ENCODE measurements at regions of chr4 and their contacts with region 1.

Region 1: GRCh38 chr4:168514249-168514852 is 17.5 kb downstream of the PALLD start:
- DNase-seq: no peak
- H3K4me3 Mint-ChIP-seq: no peak overlapping the region
- H3K27ac Mint-ChIP-seq: no peak overlapping the region
- H3K4me1 Mint-ChIP-seq: peaks cover 30% of the 10 kb centered on the region
- H3K27me3 Mint-ChIP-seq: no peaks in the 10 kb centered on the region

Region 2: DNA sequence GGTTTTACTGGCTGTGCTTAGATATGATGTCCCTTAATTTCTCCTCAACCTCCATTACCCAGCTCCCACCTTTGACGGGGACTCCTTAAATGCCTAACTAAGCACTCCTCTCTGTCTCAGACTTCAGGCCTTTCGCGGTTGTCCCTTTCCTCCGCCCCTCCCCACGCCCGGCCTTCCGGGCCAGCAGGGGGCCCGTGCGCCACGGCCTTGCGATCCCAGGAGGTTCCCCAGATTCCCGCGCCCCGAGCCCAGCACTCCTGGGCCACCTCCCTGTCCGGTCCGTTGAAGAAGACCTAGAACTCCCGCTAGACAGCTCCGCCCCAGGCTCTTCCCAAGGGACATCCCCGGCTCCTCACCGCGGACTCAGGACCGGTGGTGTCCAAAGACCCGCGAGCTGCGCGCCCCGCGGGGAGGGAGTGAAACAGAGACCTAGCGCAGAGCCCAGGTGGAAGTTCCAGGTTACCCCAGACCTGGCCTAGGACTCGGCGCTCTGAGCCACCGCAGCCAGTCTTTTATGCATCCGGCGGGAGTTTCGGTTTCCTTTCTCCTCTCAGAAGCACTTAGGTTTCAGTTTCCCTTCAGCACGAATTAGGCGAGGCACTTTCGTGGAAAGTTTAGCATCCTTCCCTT is 196.0 kb before region 1 on chr4 and contains the start of gene DDX60:
- CTCF ChIA-PET with region 1: interaction called, 3 read pairs
- POLR2A ChIA-PET with region 1: no interaction called
- intact Hi-C with region 1: loop called (anchors 1 kb)
- DNase-seq: peak; percentile 89
- H3K4me3 Mint-ChIP-seq: peak within 1 kb of the TSS; percentile 84
- H3K27ac Mint-ChIP-seq: peak within 1 kb of the TSS; percentile 88
- H3K4me1 Mint-ChIP-seq: peaks cover 32% of the 10 kb centered on the region
- H3K27me3 Mint-ChIP-seq: no peaks in the 10 kb centered on the region
- total RNA-seq, gene DDX60: 24.1 to 28.9 TPM

Region 3: DNA sequence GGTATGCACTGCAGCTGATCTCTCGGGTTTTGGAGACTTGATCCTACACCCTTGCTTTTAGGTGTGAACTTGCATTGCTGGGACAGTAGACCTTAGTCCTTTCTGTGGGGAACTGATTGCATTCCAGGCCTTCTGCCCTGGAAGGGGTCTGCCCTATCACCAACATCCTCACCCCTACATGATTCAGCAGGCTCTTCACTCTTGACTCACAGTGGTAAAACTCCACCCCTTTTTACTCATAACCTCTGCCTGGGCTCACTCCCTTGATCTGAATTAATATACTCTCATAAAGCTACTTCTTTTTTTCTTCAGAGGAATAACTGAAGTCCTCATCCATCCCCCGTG is 27.4 kb before region 1 on chr4:
- CTCF ChIA-PET with region 1: interaction called, 3 read pairs
- POLR2A ChIA-PET with region 1: interaction called, 3 read pairs
- intact Hi-C with region 1: loop called (anchors 1 kb)
- DNase-seq: peak; percentile 23
- H3K4me3 Mint-ChIP-seq: no peak overlapping the region
- H3K27ac Mint-ChIP-seq: peak overlapping the region; percentile 25
- H3K4me1 Mint-ChIP-seq: peaks cover 25% of the 10 kb centered on the region
- H3K27me3 Mint-ChIP-seq: peaks cover 2% of the 10 kb centered on the region

Region 4: DNA sequence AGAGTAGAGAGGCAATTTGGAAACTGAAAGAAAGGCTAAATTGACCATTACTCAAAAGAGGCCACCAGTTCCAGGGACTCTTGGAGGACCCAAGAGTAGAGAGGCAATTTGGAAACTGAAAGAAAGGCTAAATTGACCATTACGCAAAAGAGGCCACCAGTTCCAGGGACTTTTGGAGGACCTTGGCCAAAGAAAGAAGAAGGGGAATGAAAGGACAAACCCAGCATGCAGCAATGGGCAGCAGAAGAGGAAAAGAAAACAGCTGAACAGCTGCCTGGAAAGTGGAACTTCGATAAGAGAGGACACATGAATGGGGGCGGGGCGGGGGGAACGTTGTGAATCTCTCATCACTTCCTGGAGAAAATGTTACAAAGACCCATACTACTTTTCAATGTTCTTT is 63.3 kb after region 1 on chr4:
- CTCF ChIA-PET with region 1: no interaction called
- POLR2A ChIA-PET with region 1: no interaction called
- intact Hi-C with region 1: no loop called
- DNase-seq: no peak
- H3K4me3 Mint-ChIP-seq: no peak overlapping the region
- H3K27ac Mint-ChIP-seq: no peak overlapping the region
- H3K4me1 Mint-ChIP-seq: no peaks in the 10 kb centered on the region
- H3K27me3 Mint-ChIP-seq: peaks cover 2% of the 10 kb centered on the region

Region 5: DNA sequence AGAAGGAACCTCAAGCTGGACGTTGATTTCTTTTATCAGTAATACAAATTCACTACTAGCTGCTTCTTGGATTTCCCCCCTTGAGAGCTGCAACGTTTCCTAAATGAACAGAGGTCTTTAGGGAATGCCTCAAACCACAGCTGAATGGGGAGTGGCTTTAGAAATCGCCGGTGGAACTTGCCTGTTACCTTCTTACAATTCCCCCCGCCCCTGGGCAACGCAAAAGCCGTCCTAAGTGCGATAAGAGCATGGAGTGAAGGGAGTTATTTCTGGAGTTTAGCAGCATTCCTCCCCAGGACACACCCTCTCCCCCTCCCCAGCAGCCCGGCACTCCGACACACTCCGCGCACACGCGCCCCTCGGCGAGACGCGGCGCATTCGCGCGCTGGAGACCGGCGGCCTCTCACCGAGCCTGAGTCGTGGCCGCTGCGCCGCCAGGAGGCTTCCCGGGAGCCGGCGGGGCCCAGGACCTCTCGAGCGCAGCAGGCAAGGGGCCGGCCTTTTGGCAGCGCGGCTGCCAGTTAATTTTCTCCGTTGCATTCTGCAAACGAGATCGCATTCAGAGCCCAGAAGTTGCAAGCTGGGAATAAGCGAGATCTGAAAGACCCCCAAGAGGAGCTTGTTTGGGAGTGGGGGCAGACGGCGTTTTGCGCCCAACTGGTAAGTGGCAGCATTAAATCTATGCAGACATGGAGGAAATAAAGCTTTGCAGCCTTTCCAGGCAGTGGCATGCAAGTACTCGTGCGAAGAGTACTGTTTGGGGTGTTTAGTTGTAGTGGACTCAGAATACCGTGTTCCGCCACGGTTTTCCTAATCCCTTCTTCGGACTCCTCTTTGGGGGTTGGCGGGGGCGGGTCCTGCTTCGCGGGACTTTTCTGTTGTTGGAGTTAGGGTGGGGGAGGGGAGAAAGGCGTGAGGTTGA is 117.2 kb after region 1 on chr4:
- CTCF ChIA-PET with region 1: no interaction called
- POLR2A ChIA-PET with region 1: no interaction called
- intact Hi-C with region 1: loop called (anchors 5 kb)
- DNase-seq: peak; percentile 16
- H3K4me3 Mint-ChIP-seq: peak overlapping the region; percentile 24
- H3K27ac Mint-ChIP-seq: no peak overlapping the region
- H3K4me1 Mint-ChIP-seq: peaks cover 6% of the 10 kb centered on the region
- H3K27me3 Mint-ChIP-seq: peaks cover 50% of the 10 kb centered on the region

Region 6: DNA sequence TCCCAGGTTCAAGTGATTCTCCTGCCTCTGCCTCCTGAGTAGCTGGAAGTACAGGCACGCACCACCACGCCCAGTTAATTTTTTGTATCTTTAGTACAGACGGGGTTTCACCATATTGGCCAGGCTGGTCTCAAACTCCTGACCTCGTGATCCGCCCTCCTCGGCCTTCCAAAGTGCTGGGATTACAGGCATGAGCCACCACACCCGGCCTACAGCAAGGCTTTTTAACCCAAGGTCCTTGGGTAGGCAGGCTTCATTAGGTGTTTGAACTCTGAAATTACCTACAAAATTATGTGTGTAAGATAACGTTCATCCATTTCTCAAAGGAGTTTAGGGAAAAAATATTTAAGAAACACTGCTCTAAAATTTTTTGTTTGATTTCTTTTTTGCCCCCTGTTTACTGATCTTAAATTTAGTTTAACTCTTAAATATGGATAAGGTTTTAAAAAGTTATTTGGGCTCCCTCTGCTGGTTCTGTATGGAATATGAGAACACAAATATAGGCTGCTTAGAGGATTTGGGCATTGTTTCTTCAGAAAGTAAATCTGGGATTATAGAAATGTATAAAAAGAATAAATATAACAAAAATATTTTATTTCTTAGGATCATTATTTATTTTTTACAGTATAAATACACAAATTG is 402.9 kb after region 1 on chr4:
- CTCF ChIA-PET with region 1: interaction called, 10 read pairs
- POLR2A ChIA-PET with region 1: no interaction called
- intact Hi-C with region 1: loop called (anchors 1 kb)
- DNase-seq: no peak
- H3K4me3 Mint-ChIP-seq: no peak overlapping the region
- H3K27ac Mint-ChIP-seq: no peak overlapping the region
- H3K4me1 Mint-ChIP-seq: no peaks in the 10 kb centered on the region
- H3K27me3 Mint-ChIP-seq: no peaks in the 10 kb centered on the region

Region 7: GRCh38 chr4:169619959-169620879 is 1105.9 kb after region 1 on chr4 and contains the start of gene CLCN3:
- CTCF ChIA-PET with region 1: no interaction called
- POLR2A ChIA-PET with region 1: no interaction called
- intact Hi-C with region 1: loop called (anchors 2 kb)
- DNase-seq: peak; percentile 94
- H3K4me3 Mint-ChIP-seq: peak within 1 kb of the TSS; percentile 96
- H3K27ac Mint-ChIP-seq: peak within 1 kb of the TSS; percentile 98
- H3K4me1 Mint-ChIP-seq: peaks cover 60% of the 10 kb centered on the region
- H3K27me3 Mint-ChIP-seq: no peaks in the 10 kb centered on the region
- total RNA-seq, gene CLCN3: 17.3 to 18.6 TPM